Naive thymus-derived CD8-positive, alpha-beta T cell (primary cell): ENCODE measurements at regions of chr17 and their contacts with region 1.

Region 1: DNA sequence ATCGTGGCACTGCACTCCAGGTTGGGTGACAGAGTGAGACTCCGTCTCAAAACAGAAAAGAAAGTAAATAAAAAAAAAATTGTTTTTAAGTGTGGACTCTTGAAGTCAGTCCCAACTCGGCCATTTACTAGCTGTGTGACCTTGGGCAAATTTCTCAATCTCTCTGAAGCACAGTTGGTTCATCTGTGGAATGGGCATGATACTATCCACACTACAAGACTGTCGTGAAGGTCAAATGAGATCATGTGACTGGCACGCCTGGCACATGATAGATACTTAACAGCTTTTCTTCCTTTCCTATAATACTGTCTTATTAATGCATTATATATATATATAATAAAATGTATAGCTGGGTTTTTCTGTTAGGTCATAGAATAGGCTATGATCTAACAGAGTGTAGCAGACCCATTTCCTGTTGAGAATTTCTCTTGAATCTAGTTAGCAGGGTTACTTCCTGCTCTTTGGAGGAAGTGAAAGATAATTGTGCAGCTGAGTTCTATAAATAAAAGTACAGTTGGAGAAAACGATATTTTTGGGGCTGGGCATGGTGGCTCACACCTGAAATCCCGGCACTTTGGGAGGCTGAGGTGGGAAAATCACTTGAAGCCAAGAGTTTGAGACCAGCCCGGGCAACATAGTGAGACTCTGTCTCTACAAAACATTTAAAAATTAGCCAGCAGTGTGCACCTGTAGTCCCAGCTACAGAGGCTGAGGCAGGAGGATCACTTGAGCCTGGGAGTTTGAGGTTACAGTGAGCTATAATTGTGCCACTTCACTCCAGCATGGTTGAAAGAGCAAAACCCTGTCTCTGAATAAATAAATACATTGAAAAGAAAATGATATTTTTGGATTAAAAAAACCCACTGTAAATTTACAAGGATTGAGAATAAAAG is 7.3 kb downstream of the MILR1 start:
- DNase-seq: peak in 3 of 10 donors; percentile 20 to 39 (median 32)
- ATAC-seq: peak; percentile 67 to 79
- H3K4me3 Mint-ChIP-seq: peak overlapping the region; percentile 38 to 76 (median 64)
- H3K27ac Mint-ChIP-seq: peak overlapping the region; percentile 86 to 96 (median 90)
- H3K4me1 Mint-ChIP-seq: peaks cover 8 to 41% (median 18%) of the 10 kb centered on the region in 4 donors
- H3K27me3 Mint-ChIP-seq: peaks cover 0 to 3% (median 0%) of the 10 kb centered on the region in 5 donors

Region 2: GRCh38 chr17:64399071-64399766 is 57.0 kb before region 1 on chr17:
- POLR2A ChIA-PET with region 1: no interaction called
- DNase-seq: no peak
- ATAC-seq: no peak
- H3K4me3 Mint-ChIP-seq: peak overlapping the region; percentile 32 to 79 (median 48)
- H3K27ac Mint-ChIP-seq: peak overlapping the region; percentile 56 to 99 (median 87)
- H3K4me1 Mint-ChIP-seq: peaks cover 25 to 79% (median 49%) of the 10 kb centered on the region in 4 donors
- H3K27me3 Mint-ChIP-seq: no peaks in the 10 kb centered on the region

Region 3: GRCh38 chr17:64410750-64411490 is 45.3 kb before region 1 on chr17:
- POLR2A ChIA-PET with region 1: no interaction called
- DNase-seq: no peak
- ATAC-seq: no peak
- H3K4me3 Mint-ChIP-seq: peak overlapping the region in 5 of 10 donors; percentile 6 to 47 (median 27)
- H3K27ac Mint-ChIP-seq: peak overlapping the region in 7 of 10 donors; percentile 8 to 57 (median 31)
- H3K4me1 Mint-ChIP-seq: peaks cover 21 to 50% (median 32%) of the 10 kb centered on the region in 4 donors
- H3K27me3 Mint-ChIP-seq: no peaks in the 10 kb centered on the region

Region 4: GRCh38 chr17:64496786-64497564 is 40.7 kb after region 1 on chr17 and contains the start of gene POLG2:
- POLR2A ChIA-PET with region 1: interaction called, 15 read pairs
- DNase-seq: peak; percentile 94 to 97 (median 95)
- ATAC-seq: peak; percentile 76 to 80
- H3K4me3 Mint-ChIP-seq: peak within 1 kb of the TSS; percentile 98 to 100 (median 100)
- H3K27ac Mint-ChIP-seq: peak within 1 kb of the TSS; percentile 96 to 99 (median 98)
- H3K4me1 Mint-ChIP-seq: peaks cover 42 to 85% (median 80%) of the 10 kb centered on the region in 4 donors
- H3K27me3 Mint-ChIP-seq: no peaks in the 10 kb centered on the region
- polyA plus RNA-seq, gene POLG2: 6.4 to 8.6 (median 7.1) TPM